Dendritic cell treated with granulocyte-macrophage colony-stimulating factor and Interleukin-4, amounts not matched to agents 40 ng/mL and 50 ng/mL, for 4 days (primary cell): ENCODE measurements at regions of chr10 and their contacts with region 1.

Region 1: GRCh38 chr10:26621889-26622711 is 75.4 kb upstream of the PDSS1 start:
- H3K4me3 Mint-ChIP-seq: peak overlapping the region; percentile 68
- H3K27ac Mint-ChIP-seq: peak overlapping the region; percentile 76
- H3K4me1 Mint-ChIP-seq: peaks cover 21% of the 10 kb centered on the region
- H3K27me3 Mint-ChIP-seq: no peaks in the 10 kb centered on the region

Region 2: GRCh38 chr10:26579256-26580077 is 42.6 kb before region 1 on chr10:
- intact Hi-C with region 1: loop called (anchors 5 kb)
- H3K4me3 Mint-ChIP-seq: no peak overlapping the region
- H3K27ac Mint-ChIP-seq: no peak overlapping the region
- H3K4me1 Mint-ChIP-seq: peaks cover 19% of the 10 kb centered on the region
- H3K27me3 Mint-ChIP-seq: no peaks in the 10 kb centered on the region

Region 3: DNA sequence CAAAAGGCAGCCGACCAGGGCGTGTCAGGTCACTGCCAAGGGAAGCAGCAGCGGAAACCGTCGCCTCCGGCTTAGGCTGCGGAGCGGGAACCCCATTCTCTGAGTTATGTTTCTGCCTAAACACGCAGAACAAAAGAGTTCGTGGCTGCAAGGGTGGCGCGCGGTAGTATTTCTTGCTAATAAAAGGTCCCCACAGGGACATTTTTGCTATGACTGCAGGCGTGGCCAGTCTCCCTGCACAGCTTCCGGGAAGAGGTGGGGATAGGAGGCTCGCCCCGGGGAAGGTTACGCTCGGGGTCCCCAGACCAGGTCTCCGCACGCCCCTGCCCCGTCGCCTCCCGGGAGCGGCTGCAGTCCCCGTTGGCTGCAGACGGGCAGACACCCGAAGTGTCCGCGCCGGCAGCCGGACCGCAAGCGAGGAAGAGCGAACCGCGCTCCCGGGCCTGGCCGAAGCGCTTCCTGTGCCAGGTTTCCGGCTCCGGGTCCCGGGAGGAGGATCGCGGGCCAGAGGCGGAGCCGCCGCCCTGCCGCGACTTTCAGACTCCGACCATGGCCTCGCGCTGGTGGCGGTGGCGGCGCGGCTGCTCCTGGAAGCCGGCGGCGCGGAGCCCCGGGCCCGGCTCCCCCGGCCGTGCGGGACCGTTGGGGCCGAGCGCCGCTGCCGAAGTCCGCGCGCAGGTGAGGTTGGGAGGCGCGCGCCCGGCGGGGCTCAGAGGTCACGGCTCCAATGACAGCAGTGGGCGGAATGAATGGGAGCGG is 75.2 kb after region 1 on chr10 and contains the start of gene PDSS1:
- intact Hi-C with region 1: loop called (anchors 5 kb)
- H3K4me3 Mint-ChIP-seq: peak within 1 kb of the TSS; percentile 98
- H3K27ac Mint-ChIP-seq: peak within 1 kb of the TSS; percentile 96
- H3K4me1 Mint-ChIP-seq: peaks cover 50% of the 10 kb centered on the region
- H3K27me3 Mint-ChIP-seq: no peaks in the 10 kb centered on the region

Region 4: DNA sequence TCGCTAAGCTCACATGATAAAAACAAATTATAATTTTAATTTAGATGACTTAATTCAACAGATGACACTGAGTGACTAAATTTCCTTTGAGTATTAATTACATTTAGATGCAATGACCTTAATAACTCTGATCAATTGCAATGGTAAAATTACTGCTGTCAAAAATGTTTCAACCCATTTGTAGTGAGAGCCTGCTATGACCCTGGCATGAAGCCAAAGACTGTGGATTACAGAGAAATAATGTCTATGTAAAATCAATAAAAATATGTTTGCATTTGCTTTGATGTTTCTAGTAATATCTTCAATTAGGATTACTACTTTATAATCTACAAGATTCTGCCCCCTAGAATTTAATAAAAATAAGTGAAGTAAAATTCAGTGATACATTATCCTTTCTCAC is 1107.9 kb after region 1 on chr10:
- intact Hi-C with region 1: no loop called
- H3K4me3 Mint-ChIP-seq: no peak overlapping the region
- H3K27ac Mint-ChIP-seq: no peak overlapping the region
- H3K4me1 Mint-ChIP-seq: no peaks in the 10 kb centered on the region
- H3K27me3 Mint-ChIP-seq: peaks cover 7% of the 10 kb centered on the region